Activated naive CD4-positive, alpha-beta T cell treated with anti-CD3 and anti-CD28 coated beads for 36 hours (primary cell): ENCODE measurements at regions of chr12 and their contacts with region 1.

Region 1: DNA sequence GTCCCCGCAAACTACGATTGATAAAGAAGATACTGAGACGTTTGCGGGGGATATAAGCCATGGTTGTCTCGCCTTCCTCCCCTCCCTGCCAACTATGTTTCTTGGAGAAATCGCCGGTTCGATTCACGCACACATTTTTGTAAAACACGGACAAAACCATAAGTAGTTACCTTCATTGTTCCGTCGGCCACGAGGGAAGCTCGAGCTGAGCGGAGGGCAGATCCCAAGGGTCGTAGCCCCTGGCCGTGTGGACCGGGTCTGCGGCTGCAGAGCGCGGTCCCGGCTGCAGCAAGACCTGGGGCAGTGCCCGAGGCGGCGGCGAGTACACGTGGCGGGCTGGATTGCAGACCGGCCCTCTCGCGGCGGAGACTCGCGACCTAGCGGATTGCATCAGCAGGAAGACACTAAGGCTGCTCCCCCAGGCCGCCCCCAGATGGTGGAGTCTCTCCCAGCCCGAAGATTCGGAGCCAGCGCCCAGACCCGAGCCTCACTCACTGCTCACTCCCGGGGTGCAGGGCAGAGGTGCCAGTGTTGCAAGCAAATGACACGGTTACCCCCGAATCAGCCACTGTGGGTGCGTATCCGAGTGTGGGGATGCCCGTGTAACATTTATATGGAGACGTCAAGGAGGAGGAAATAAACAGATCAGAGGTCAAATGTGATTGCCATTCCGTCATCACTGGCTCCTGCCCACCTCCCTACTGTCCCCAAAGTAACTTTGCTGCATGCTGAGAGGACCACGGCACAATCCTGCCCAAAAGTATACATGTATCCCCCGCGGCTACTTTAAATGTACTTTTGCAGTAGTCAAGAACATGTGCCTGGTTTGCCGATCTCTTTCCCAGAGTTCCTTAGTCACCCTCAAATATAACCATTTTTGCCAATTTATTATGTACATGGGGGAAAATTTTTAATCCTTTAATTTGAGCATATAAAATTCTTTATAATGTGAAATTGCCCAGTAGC is at the start of gene BCAT1:
- DNase-seq: peak; percentile 35
- H3K4me3 Mint-ChIP-seq: peak within 1 kb of the TSS; percentile 81
- H3K27ac Mint-ChIP-seq: peak within 1 kb of the TSS; percentile 81
- H3K4me1 Mint-ChIP-seq: peaks cover 59% of the 10 kb centered on the region
- H3K27me3 Mint-ChIP-seq: peaks cover 62% of the 10 kb centered on the region
- total RNA-seq, gene BCAT1: 16.4 to 16.7 TPM

Region 2: DNA sequence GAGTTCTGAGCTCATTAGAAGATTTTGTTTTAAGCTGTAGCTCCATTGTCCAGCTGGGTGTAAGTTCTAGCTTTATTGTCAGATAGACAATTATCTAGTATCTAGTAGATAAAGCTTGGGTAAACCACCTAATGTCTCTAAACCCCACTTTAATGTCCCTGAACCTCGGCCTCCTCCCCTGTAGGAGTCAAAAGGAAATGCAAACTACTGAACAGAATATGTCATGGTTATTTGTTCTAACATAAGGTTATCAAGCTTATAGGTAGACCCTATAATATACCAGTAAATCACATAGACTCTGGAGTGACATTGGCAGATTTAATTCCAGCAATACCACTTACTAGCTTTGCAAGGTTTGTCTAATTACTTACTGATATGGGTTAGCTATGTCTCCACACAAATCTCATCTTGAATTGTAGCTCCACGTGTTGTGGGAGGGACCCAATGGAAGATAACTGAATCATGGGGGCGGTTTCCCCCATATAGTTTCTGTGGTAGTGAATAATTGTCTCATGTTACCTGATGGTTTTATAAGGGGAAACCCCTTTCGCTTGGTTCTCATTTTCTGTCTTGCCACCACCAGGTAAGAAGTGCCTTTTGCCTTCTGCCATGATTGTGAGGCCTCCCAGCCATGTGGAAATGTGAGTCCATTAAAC is 29.6 kb before region 1 on chr12:
- CTCF ChIA-PET with region 1: no interaction called
- intact Hi-C with region 1: loop called (anchors 1 kb)
- DNase-seq: peak; percentile 78
- H3K4me3 Mint-ChIP-seq: no peak overlapping the region
- H3K27ac Mint-ChIP-seq: no peak overlapping the region
- H3K4me1 Mint-ChIP-seq: peaks cover 42% of the 10 kb centered on the region
- H3K27me3 Mint-ChIP-seq: peaks cover 13% of the 10 kb centered on the region

Region 3: DNA sequence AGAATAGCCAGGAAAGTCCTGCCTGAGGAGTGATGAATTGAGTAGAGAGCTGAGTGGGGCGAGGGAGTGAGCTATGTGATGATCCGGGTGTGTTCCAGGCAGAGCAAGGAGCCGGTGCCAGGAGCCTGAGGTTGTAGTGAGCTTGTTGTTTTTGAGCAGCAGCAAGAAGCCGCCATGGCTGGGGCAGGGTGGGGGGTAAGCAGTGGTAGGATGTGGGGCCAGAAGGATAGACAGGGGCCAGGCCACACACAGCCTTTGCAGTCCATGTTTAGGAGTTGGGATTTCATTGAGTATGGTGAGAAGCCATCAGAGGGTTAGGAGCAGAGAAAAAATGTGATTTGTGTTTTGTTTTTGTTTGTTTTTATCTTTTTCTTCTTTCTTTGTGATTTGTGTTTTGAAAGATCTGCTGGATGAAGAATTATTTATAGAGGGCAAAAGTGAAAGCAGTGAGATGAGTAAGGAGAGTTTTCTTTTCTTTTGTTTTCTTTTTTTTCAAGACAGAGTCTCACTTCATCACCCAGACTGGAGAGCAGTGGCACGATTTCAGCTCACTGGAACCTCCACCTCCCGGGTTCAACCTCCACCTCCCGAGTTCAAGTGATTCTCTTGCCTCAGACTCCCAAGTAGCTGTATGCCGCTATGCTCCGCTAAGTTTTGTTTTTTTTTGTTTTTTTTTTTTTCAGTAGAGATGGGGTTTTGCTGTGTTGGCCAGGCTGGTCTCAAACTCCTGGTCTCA is 92.1 kb after region 1 on chr12:
- CTCF ChIA-PET with region 1: no interaction called
- intact Hi-C with region 1: no loop called
- DNase-seq: no peak
- H3K4me3 Mint-ChIP-seq: no peak overlapping the region
- H3K27ac Mint-ChIP-seq: no peak overlapping the region
- H3K4me1 Mint-ChIP-seq: peaks cover 5% of the 10 kb centered on the region
- H3K27me3 Mint-ChIP-seq: no peaks in the 10 kb centered on the region